Psoas muscle (tissue), 8 donors: ENCODE measurements at regions of chr17 and their contacts with region 1.

Region 1: DNA sequence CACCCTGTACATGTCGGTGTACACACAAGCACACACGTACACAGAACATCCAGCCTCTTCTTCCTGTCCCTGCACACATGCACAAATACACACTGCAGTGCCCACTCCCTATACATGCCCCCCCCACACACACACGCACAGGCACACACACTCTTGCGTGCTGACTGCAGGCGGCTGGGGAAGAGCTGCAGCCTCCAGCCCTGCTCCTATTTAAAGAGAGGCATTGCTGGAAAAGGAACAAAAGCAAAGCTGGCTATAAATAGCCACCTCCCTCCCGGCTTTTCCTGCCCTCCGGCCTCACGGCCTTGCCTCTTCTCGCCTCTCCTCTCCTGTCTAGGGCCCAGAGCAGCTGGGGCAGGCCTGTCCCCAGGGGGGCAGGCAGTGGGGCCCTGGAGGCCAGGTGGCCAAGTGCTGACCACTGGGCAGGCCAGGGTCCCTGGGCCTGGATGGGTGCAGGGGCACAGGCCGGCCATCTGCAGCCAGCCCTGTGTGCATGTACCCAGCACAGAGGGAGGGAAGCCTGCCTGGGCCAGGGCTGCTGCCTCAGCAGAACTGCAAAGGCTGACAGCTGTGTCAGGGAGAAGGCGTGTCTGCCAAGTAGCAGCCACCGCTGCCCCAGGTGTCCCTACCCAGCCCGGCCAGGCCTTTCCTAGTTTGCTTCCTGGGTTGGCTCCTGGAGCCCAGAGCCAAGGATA is 25.4 kb downstream of the RTN4RL1 start:
- DNase-seq: peak; percentile 60 to 82
- ATAC-seq: peak; percentile 77 to 86 (median 79)
- H3K4me3 ChIP-seq: peak overlapping the region; percentile 45
- H3K27ac ChIP-seq: peak overlapping the region; percentile 92
- H3K4me1 ChIP-seq: peaks cover 47% of the 10 kb centered on the region
- H3K27me3 ChIP-seq: peaks cover 0 to 6% (median 0%) of the 10 kb centered on the region in 3 donors
- CTCF ChIP-seq: no peak

Region 2: GRCh38 chr17:1939981-1940809 is 59.5 kb before region 1 on chr17:
- intact Hi-C with region 1: loop called in 1 of 2 experiments (anchors 5 kb)
- DNase-seq: peak; percentile 52 to 88
- ATAC-seq: peak; percentile 94 to 99 (median 96)
- H3K4me3 ChIP-seq: peak overlapping the region; percentile 28
- H3K27ac ChIP-seq: peak overlapping the region; percentile 95
- H3K4me1 ChIP-seq: peaks cover 23% of the 10 kb centered on the region
- H3K27me3 ChIP-seq: no peaks in the 10 kb centered on the region
- CTCF ChIP-seq: no peak

Region 3: DNA sequence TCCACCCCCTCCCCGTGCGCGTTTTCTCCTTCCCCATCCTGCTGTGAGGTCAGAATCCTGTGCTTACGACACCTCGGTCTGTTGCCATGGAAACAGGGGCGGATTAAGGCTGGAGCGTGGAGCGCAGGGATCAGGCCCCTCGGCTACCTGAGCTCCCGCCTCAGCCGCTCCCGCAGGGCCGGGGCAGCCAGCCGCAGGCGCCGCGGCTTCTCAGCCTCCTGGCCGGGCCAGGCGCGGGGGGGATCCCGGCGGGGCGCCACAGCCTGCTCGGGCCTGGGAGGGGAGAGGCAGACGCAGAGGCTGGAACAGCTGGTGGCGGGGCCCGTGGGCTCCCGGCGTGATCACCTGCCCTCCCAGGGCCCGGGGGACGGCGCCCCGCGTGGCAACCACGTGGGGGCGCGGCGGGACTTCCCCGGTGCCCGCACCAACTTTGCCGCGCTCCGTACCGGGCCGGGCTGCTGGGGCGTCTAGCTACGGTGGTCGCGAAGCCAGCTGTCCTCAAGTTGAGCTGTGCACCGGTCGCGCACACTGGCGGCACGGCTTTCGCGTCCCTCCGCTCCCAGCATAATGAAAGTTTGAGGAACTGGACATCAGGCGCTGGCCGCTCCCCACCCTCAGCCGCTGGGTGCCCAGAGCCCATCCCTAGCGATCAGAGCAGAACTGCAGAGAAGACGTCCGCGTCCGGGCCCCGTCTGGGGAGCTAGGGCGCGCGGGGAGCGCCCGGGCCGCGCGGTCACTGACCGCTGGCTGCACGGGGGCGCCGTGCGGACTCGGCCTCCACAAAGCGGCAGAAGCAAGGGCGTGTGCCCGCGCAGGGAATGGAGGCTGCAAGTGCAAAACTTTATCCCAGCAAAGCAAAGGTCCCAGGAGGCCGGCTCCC is 24.2 kb after region 1 on chr17:
- intact Hi-C with region 1: loop called in 1 of 2 experiments (anchors 2 kb)
- DNase-seq: peak; percentile 55 to 69
- ATAC-seq: peak; percentile 36 to 67 (median 54)
- H3K4me3 ChIP-seq: peak overlapping the region; percentile 80
- H3K27ac ChIP-seq: peak overlapping the region; percentile 28
- H3K4me1 ChIP-seq: peaks cover 13% of the 10 kb centered on the region
- H3K27me3 ChIP-seq: no peaks in the 10 kb centered on the region
- CTCF ChIP-seq: no peak

Region 4: GRCh38 chr17:2058586-2059546 is 59.2 kb after region 1 on chr17:
- intact Hi-C with region 1: no loop called
- DNase-seq: peak; percentile 78 to 86
- ATAC-seq: peak in 2 of 4 donors; percentile 8 to 10
- H3K4me3 ChIP-seq: peak overlapping the region; percentile 74
- H3K27ac ChIP-seq: peak overlapping the region; percentile 62
- H3K4me1 ChIP-seq: peaks cover under 1% of the 10 kb centered on the region
- H3K27me3 ChIP-seq: peaks cover 0 to 2% (median 2%) of the 10 kb centered on the region in 3 donors
- CTCF ChIP-seq: peak; percentile 49

Region 5: DNA sequence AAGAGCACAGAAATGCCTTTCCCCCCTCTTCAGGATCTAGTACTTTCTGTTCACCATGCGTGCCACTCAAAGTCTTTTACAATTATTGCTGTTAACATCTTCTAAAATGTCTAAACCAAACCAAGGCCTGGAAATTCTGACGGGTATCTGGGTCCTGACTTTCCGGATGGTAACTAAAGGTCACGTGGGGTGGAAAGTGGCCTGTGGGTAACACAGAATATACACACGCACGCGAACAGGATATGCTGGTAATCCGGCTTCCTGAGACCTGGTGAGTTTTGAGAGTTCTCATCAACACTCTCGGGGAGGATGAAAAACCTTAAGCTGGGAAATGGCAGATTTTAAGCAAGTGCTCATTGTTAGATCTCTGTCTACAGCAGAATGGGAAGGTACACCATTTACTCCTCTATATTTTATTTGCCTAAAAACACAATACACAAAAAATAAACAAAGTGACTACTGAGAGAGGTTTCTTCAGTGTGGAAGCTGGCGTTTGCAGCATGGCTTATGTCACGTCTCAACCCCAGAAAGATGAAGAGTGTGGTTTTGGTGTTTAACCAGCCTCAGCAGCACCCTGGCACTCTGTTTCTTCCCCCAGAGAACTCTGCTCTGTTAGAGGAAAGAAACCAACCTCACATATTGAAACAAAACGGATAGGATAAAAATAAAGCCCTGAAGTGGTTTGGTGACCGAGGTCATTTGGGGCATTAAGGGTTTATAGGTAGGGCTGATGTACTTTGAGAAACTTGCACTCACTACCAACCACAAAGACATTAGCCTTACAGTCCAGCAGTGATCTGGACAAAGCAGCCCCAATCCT is 266.6 kb after region 1 on chr17:
- intact Hi-C with region 1: no loop called
- DNase-seq: no peak
- ATAC-seq: no peak
- H3K4me3 ChIP-seq: no peak overlapping the region
- H3K27ac ChIP-seq: no peak overlapping the region
- H3K4me1 ChIP-seq: peaks cover 21% of the 10 kb centered on the region
- H3K27me3 ChIP-seq: no peaks in the 10 kb centered on the region
- CTCF ChIP-seq: no peak